ENCODE measurements at regions of chr20 and their contacts with region 1.

Region 1: GRCh38 chr20:44217342-44218092 is 6.9 kb upstream of the OSER1 start:
- DNase-seq: peak; percentile 51 to 87 (median 63)
- ATAC-seq: peak; percentile 49
- H3K4me3 ChIP-seq: peak overlapping the region; percentile 41
- H3K4me3 Mint-ChIP-seq: peak overlapping the region; percentile 80
- H3K27ac ChIP-seq: peak overlapping the region; percentile 62 to 71
- H3K27ac Mint-ChIP-seq: peak overlapping the region; percentile 91
- H3K4me1 ChIP-seq: peaks cover 46% of the 10 kb centered on the region
- H3K4me1 Mint-ChIP-seq: peaks cover 60% of the 10 kb centered on the region
- H3K27me3 ChIP-seq: no peaks in the 10 kb centered on the region
- H3K27me3 Mint-ChIP-seq: no peaks in the 10 kb centered on the region
- CTCF ChIP-seq: peak; percentile 98

Region 2: GRCh38 chr20:43938932-43939761 is 278.4 kb before region 1 on chr20:
- CTCF ChIA-PET with region 1: no interaction called
- POLR2A ChIA-PET with region 1: no interaction called
- intact Hi-C with region 1: no loop called
- DNase-seq: no peak
- ATAC-seq: no peak
- H3K4me3 ChIP-seq: no peak overlapping the region
- H3K4me3 Mint-ChIP-seq: no peak overlapping the region
- H3K27ac ChIP-seq: no peak overlapping the region
- H3K27ac Mint-ChIP-seq: no peak overlapping the region
- H3K4me1 ChIP-seq: peaks cover 55% of the 10 kb centered on the region
- H3K4me1 Mint-ChIP-seq: peaks cover 64% of the 10 kb centered on the region
- H3K27me3 ChIP-seq: peaks cover 0 to 4% of the 10 kb centered on the region in 2 experiments
- H3K27me3 Mint-ChIP-seq: no peaks in the 10 kb centered on the region
- CTCF ChIP-seq: no peak

Region 3: DNA sequence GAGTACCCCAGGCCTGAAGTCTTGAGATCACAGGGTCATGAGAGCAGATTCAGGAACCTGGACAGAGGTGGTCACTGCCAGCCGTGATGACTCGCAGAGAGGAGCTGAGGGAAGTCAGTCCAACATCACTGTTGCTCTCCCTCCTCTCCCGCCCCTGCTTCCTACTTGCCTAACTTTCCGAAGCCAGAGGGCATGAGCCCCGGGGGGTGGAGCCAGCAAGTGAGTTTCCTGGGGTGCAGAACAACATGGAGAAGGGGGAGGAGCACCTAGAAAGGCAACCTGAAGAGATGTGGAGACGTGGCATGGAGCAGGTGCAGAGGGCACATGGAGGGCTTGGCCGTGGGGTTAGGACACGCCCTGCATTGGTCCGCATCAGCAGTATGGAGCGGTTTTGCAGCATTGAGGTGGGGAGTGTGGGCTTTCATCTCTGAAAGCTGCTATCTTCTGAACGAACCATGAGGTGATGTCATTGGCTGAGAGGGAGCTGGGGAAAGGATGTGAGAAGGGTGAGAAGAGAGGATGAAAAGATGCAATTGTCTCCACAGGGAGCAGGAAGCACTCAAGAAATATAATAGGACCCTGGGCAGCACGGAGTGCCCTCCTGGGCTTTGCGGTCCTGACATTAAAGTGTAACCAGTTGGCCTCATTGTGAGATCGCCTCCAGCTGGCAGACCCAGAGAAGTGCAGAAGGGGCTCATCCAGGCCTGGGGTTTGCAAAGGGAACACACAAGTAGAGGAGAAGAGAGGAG is 54.6 kb after region 1 on chr20:
- CTCF ChIA-PET with region 1: interaction called, 10 read pairs
- POLR2A ChIA-PET with region 1: interaction called, 4 read pairs
- intact Hi-C with region 1: loop called in 1 of 2 experiments (anchors 1 kb)
- DNase-seq: peak in 6 of 14 experiments; percentile 10 to 40 (median 24)
- ATAC-seq: no peak
- H3K4me3 ChIP-seq: no peak overlapping the region
- H3K4me3 Mint-ChIP-seq: no peak overlapping the region
- H3K27ac ChIP-seq: no peak overlapping the region
- H3K27ac Mint-ChIP-seq: no peak overlapping the region
- H3K4me1 ChIP-seq: peaks cover 3% of the 10 kb centered on the region
- H3K4me1 Mint-ChIP-seq: no peaks in the 10 kb centered on the region
- H3K27me3 ChIP-seq: no peaks in the 10 kb centered on the region
- H3K27me3 Mint-ChIP-seq: no peaks in the 10 kb centered on the region
- CTCF ChIP-seq: peak; percentile 11

Region 4: DNA sequence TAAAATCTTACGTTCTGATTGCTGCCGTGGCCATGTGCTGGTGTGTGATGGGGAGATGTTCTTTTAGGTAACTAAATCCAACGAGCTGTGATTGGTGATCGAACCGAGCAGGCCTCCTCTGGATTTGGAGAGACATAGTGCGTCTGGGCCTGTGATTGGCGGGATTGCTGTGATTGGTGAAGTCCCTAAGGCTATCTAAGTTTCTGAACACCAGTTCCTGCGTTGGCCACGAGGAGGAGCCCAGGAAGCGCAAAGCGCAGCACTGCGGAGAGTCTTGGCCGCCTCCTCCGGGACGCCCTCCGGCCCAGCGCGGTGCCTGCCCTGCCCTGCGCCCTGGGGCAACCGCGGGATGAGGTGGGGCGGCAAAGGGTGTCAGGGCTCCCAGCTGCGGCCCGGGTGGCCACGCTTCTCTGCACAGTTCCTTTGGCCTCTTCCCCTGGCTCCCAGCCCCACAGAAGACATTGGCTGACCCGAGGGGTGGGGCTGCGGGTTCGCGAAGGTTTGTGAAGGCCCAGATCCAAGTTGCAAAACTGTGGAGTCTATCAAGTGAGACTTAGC is 171.0 kb after region 1 on chr20:
- CTCF ChIA-PET with region 1: interaction called, 14 read pairs
- POLR2A ChIA-PET with region 1: interaction called, 3 read pairs
- intact Hi-C with region 1: loop called (anchors 1 kb)
- DNase-seq: peak; percentile 39 to 85 (median 56)
- ATAC-seq: peak; percentile 92
- H3K4me3 ChIP-seq: no peak overlapping the region
- H3K4me3 Mint-ChIP-seq: no peak overlapping the region
- H3K27ac ChIP-seq: no peak overlapping the region
- H3K27ac Mint-ChIP-seq: no peak overlapping the region
- H3K4me1 ChIP-seq: peaks cover 8% of the 10 kb centered on the region
- H3K4me1 Mint-ChIP-seq: peaks cover 15% of the 10 kb centered on the region
- H3K27me3 ChIP-seq: peaks cover 4% of the 10 kb centered on the region in 2 experiments
- H3K27me3 Mint-ChIP-seq: peaks cover 8% of the 10 kb centered on the region
- CTCF ChIP-seq: peak; percentile 66

Region 5: DNA sequence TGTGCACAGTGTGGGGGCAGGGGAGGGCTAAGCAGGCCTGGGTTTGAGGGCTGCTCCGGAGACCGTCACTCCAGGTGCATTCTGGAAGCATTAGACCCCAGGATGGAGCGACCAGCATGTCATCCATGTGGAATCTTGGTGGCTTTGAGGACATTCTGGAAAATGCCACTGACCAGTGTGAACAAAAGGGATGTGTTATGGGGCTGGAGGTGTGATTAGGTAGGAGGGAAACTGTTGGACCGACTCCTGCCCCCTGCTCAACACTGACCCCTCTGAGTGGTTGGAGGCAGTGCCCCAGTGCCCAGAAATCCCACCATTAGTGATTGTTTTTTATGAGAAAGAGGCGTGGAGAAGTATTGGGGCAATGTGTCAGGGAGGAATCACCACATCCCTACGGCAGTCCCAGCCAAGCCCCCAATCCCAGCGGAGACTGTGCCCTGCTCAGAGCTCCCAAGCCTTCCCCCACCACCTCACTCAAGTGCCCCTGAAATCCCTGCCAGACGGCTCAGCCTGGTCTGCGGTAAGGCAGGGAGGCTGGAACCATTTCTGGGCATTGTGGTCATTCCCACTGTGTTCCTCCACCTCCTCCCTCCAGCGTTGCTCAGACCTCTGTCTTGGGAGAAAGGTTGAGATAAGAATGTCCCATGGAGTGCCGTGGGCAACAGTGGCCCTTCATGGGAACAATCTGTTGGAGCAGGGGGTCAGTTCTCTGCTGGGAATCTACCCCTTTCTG is 214.2 kb after region 1 on chr20:
- CTCF ChIA-PET with region 1: no interaction called
- POLR2A ChIA-PET with region 1: no interaction called
- intact Hi-C with region 1: no loop called
- DNase-seq: no peak
- ATAC-seq: no peak
- H3K4me3 ChIP-seq: no peak overlapping the region
- H3K4me3 Mint-ChIP-seq: no peak overlapping the region
- H3K27ac ChIP-seq: no peak overlapping the region
- H3K27ac Mint-ChIP-seq: no peak overlapping the region
- H3K4me1 ChIP-seq: no peaks in the 10 kb centered on the region
- H3K4me1 Mint-ChIP-seq: no peaks in the 10 kb centered on the region
- H3K27me3 ChIP-seq: peaks cover 0 to 5% of the 10 kb centered on the region in 2 experiments
- H3K27me3 Mint-ChIP-seq: peaks cover 17% of the 10 kb centered on the region
- CTCF ChIP-seq: no peak

Region 6: DNA sequence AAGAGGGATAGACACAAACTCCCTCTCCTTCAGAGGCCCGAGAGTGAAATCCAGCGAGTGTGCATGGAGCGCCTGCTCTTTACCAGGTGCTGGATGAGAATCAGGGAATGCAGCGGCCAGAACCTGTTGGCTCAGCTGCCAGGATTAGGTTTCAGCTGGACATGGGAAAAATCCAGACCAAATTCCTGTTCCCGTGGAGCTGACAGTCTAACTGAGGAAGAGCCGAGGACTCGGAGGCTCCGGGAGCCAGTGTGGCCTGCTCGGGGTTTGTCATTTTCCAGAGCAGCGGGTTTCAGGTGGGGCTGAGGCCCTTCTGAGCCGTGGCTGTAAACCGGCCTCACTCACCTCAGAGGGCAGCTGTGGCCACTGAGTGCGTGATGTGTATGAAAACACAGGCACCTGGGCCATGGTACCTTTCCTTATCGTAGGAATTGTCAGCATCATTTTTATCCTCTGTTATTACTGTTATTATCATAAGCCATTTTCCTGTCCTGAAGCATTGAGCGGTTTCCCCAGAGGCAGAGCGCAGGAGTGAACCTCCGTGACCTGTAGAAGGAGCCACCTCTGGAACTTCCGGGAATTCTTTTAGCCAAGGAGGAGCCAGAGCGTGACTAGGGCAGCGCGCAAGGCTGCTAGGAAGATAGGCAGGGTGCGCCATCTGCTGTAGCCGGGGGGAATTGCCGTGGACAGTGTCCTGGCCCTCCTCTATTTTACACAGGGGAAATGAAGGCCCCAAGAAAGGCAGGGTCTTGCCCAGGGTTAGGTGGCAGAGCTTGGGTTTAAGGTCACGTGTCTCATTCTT is 392.2 kb after region 1 on chr20:
- CTCF ChIA-PET with region 1: interaction called, 6 read pairs
- POLR2A ChIA-PET with region 1: interaction called, 6 read pairs
- intact Hi-C with region 1: loop called (anchors 1 to 2 kb)
- DNase-seq: peak; percentile 68 to 90 (median 80)
- ATAC-seq: peak; percentile 81
- H3K4me3 ChIP-seq: no peak overlapping the region
- H3K4me3 Mint-ChIP-seq: peak overlapping the region; percentile 83
- H3K27ac ChIP-seq: peak overlapping the region; percentile 35 to 86
- H3K27ac Mint-ChIP-seq: peak overlapping the region; percentile 98
- H3K4me1 ChIP-seq: peaks cover 28% of the 10 kb centered on the region
- H3K4me1 Mint-ChIP-seq: peaks cover 40% of the 10 kb centered on the region
- H3K27me3 ChIP-seq: no peaks in the 10 kb centered on the region
- H3K27me3 Mint-ChIP-seq: no peaks in the 10 kb centered on the region
- CTCF ChIP-seq: peak; percentile 93

Region 7: GRCh38 chr20:44866703-44867335 is 649.3 kb after region 1 on chr20:
- CTCF ChIA-PET with region 1: no interaction called
- POLR2A ChIA-PET with region 1: no interaction called
- intact Hi-C with region 1: loop called (anchors 1 to 5 kb)
- DNase-seq: peak in 2 of 14 experiments; percentile 32 to 40
- ATAC-seq: no peak
- H3K4me3 ChIP-seq: no peak overlapping the region
- H3K4me3 Mint-ChIP-seq: peak overlapping the region; percentile 70
- H3K27ac ChIP-seq: no peak overlapping the region
- H3K27ac Mint-ChIP-seq: no peak overlapping the region
- H3K4me1 ChIP-seq: peaks cover 7% of the 10 kb centered on the region
- H3K4me1 Mint-ChIP-seq: peaks cover 10% of the 10 kb centered on the region
- H3K27me3 ChIP-seq: peaks cover 0 to 5% of the 10 kb centered on the region in 2 experiments
- H3K27me3 Mint-ChIP-seq: peaks cover 9% of the 10 kb centered on the region
- CTCF ChIP-seq: no peak